MCF 10A (cell line): ENCODE measurements at regions of chr5 and their contacts with region 1.

Region 1: GRCh38 chr5:171342362-171343111 is 33.5 kb downstream of the TLX3 start:
- DNase-seq: peak; percentile 82
- H3K4me3 Mint-ChIP-seq: no peak overlapping the region
- H3K27ac Mint-ChIP-seq: no peak overlapping the region
- H3K4me1 Mint-ChIP-seq: no peaks in the 10 kb centered on the region
- H3K27me3 Mint-ChIP-seq: no peaks in the 10 kb centered on the region
- CTCF ChIP-seq: peak; percentile 94

Region 2: DNA sequence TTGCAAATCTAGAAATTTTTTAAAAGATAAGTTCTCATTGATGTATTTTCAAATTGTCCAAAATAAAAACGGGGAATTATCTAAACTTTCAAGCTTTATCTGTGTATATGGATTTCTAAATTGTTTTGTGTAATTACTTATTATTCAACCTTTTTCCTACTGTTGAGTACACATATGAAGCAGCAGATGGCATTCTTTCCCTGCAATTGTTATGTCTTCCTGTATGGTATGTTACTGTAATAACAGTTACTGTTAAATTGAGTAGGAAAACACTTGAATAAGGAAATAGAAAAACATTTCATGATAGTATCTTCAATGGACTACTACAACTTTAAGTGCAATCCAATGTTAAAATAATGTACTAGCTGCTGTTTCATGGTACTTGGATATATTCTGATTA is 355.9 kb before region 1 on chr5:
- CTCF ChIA-PET with region 1: interaction called, 10 read pairs
- POLR2A ChIA-PET with region 1: no interaction called
- intact Hi-C with region 1: loop called (anchors 1 kb)
- DNase-seq: peak; percentile 48
- H3K4me3 Mint-ChIP-seq: no peak overlapping the region
- H3K27ac Mint-ChIP-seq: no peak overlapping the region
- H3K4me1 Mint-ChIP-seq: peaks cover 12% of the 10 kb centered on the region
- H3K27me3 Mint-ChIP-seq: no peaks in the 10 kb centered on the region
- CTCF ChIP-seq: peak; percentile 33

Region 3: GRCh38 chr5:171272996-171273970 is 69.3 kb before region 1 on chr5:
- CTCF ChIA-PET with region 1: interaction called, 4 read pairs
- POLR2A ChIA-PET with region 1: no interaction called
- intact Hi-C with region 1: loop called (anchors 1 kb)
- DNase-seq: peak; percentile 49
- H3K4me3 Mint-ChIP-seq: no peak overlapping the region
- H3K27ac Mint-ChIP-seq: no peak overlapping the region
- H3K4me1 Mint-ChIP-seq: peaks cover 21% of the 10 kb centered on the region
- H3K27me3 Mint-ChIP-seq: no peaks in the 10 kb centered on the region
- CTCF ChIP-seq: peak; percentile 32

Region 4: GRCh38 chr5:171330021-171330420 is 12.5 kb before region 1 on chr5:
- CTCF ChIA-PET with region 1: interaction called, 10 read pairs
- POLR2A ChIA-PET with region 1: no interaction called
- intact Hi-C with region 1: no loop called
- DNase-seq: no peak
- H3K4me3 Mint-ChIP-seq: no peak overlapping the region
- H3K27ac Mint-ChIP-seq: no peak overlapping the region
- H3K4me1 Mint-ChIP-seq: no peaks in the 10 kb centered on the region
- H3K27me3 Mint-ChIP-seq: peaks cover 27% of the 10 kb centered on the region
- CTCF ChIP-seq: no peak

Region 5: GRCh38 chr5:171484460-171484899 is 141.9 kb after region 1 on chr5:
- CTCF ChIA-PET with region 1: no interaction called
- POLR2A ChIA-PET with region 1: no interaction called
- intact Hi-C with region 1: no loop called
- DNase-seq: peak; percentile 58
- H3K4me3 Mint-ChIP-seq: no peak overlapping the region
- H3K27ac Mint-ChIP-seq: no peak overlapping the region
- H3K4me1 Mint-ChIP-seq: peaks cover 9% of the 10 kb centered on the region
- H3K27me3 Mint-ChIP-seq: peaks cover 19% of the 10 kb centered on the region
- CTCF ChIP-seq: peak; percentile 96